Activated CD4-positive, alpha-beta T cell treated with anti-CD3 and anti-CD28 coated beads for 36 hours (primary cell): ENCODE measurements at regions of chr12 and their contacts with region 1.

Region 1: DNA sequence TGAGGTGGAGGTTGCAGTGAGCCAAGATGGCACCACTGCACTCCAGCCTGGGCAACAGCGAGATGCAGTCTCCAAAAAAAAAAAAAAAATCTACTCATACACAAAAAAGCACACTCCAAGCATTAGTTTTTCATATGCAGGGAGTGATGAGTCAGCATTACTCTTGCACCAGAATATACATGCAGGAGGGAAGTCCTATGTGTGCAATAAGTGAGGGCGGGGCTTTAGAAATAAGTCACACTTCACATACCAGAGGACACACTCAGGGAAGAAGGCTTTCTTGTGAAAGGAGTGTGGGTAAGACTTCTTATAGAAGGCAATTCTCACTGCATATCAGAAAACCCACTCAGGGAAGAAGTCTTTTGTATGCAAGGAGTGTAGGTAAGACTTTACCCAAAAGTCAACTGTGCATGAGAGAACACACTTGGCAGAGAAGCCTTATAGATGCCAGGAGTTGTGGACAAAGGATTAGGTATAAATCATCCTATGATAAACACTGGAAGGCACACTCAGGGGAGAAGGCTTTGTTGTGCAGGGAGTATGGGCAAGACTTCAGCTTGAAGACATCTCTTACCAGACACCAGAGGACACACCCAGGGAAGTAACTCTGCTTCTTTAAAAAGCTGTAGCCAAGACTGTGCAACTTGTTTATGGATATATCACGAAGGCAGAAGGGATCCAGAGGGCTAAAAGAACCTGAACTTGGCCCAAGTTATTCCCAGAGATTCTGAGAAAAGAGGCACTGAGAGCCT is 50.5 kb downstream of the ATF7 start:
- DNase-seq: peak; percentile 23
- ATAC-seq: peak; percentile 78
- H3K4me3 Mint-ChIP-seq: no peak overlapping the region
- H3K27ac Mint-ChIP-seq: no peak overlapping the region
- H3K4me1 Mint-ChIP-seq: peaks cover 45% of the 10 kb centered on the region
- H3K27me3 Mint-ChIP-seq: no peaks in the 10 kb centered on the region

Region 2: GRCh38 chr12:53267999-53268647 is 307.6 kb before region 1 on chr12 and contains the start of gene ESPL1:
- CTCF ChIA-PET with region 1: no interaction called
- POLR2A ChIA-PET with region 1: no interaction called
- intact Hi-C with region 1: no loop called
- DNase-seq: peak; percentile 93
- ATAC-seq: peak; percentile 86
- H3K4me3 Mint-ChIP-seq: peak within 1 kb of the TSS; percentile 92
- H3K27ac Mint-ChIP-seq: peak within 1 kb of the TSS; percentile 98
- H3K4me1 Mint-ChIP-seq: peaks cover 30% of the 10 kb centered on the region
- H3K27me3 Mint-ChIP-seq: no peaks in the 10 kb centered on the region
- total RNA-seq, gene ESPL1: 60.8 to 66.9 TPM

Region 3: GRCh38 chr12:53561590-53561953 is 14.1 kb before region 1 on chr12:
- CTCF ChIA-PET with region 1: interaction called, 3 read pairs
- POLR2A ChIA-PET with region 1: interaction called, 3 read pairs
- intact Hi-C with region 1: loop called (anchors 2 kb)
- DNase-seq: no peak
- ATAC-seq: peak; percentile 93
- H3K4me3 Mint-ChIP-seq: no peak overlapping the region
- H3K27ac Mint-ChIP-seq: peak overlapping the region; percentile 76
- H3K4me1 Mint-ChIP-seq: peaks cover 63% of the 10 kb centered on the region
- H3K27me3 Mint-ChIP-seq: no peaks in the 10 kb centered on the region

Region 4: DNA sequence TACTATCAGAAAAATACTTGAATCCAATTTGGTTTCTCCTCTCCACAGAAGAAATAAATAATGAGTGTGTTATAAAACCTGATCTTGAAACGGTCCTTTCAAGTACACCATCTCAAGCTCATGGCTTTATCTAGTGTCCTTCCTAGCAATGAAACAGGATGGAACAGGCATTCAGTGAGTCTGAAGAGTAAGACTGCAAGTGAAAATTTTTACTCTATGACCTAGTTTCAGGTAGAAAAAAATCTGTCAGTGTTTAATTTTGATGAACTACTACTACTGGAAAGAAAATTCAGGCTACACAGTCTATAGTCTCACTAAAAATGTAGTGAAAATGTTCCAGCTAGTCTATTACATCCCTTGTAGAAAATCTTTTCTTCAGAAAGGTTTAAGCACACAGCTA is 696.5 kb after region 1 on chr12:
- CTCF ChIA-PET with region 1: no interaction called
- POLR2A ChIA-PET with region 1: no interaction called
- intact Hi-C with region 1: no loop called
- DNase-seq: no peak
- ATAC-seq: peak; percentile 87
- H3K4me3 Mint-ChIP-seq: no peak overlapping the region
- H3K27ac Mint-ChIP-seq: peak overlapping the region; percentile 79
- H3K4me1 Mint-ChIP-seq: peaks cover 67% of the 10 kb centered on the region
- H3K27me3 Mint-ChIP-seq: no peaks in the 10 kb centered on the region